Activated CD8-positive, alpha-beta memory T cell treated with anti-CD3 and anti-CD28 coated beads, Interleukin-2, amount 10 ng/mL, durations not matched to agents 7 days and 5 days (primary cell): ENCODE measurements at regions of chr7 and their contacts with region 1.

Region 1: GRCh38 chr7:112550468-112551060 is 69.8 kb downstream of the LSMEM1 start:
- DNase-seq: no peak
- ATAC-seq: peak; percentile 45
- H3K4me3 Mint-ChIP-seq: no peak overlapping the region
- H3K27ac Mint-ChIP-seq: no peak overlapping the region
- H3K4me1 Mint-ChIP-seq: no peaks in the 10 kb centered on the region
- H3K27me3 Mint-ChIP-seq: peaks cover 3% of the 10 kb centered on the region

Region 2: GRCh38 chr7:112538726-112539255 is 11.8 kb before region 1 on chr7:
- CTCF ChIA-PET with region 1: no interaction called
- DNase-seq: no peak
- ATAC-seq: no peak
- H3K4me3 Mint-ChIP-seq: no peak overlapping the region
- H3K27ac Mint-ChIP-seq: no peak overlapping the region
- H3K4me1 Mint-ChIP-seq: no peaks in the 10 kb centered on the region
- H3K27me3 Mint-ChIP-seq: peaks cover 36% of the 10 kb centered on the region

Region 3: GRCh38 chr7:112869111-112869757 is 318.7 kb after region 1 on chr7:
- CTCF ChIA-PET with region 1: interaction called, 12 read pairs
- DNase-seq: peak; percentile 70
- ATAC-seq: peak; percentile 76
- H3K4me3 Mint-ChIP-seq: no peak overlapping the region
- H3K27ac Mint-ChIP-seq: no peak overlapping the region
- H3K4me1 Mint-ChIP-seq: peaks cover 10% of the 10 kb centered on the region
- H3K27me3 Mint-ChIP-seq: no peaks in the 10 kb centered on the region

Region 4: GRCh38 chr7:112898432-112899290 is 348.1 kb after region 1 on chr7:
- CTCF ChIA-PET with region 1: interaction called, 15 read pairs
- DNase-seq: peak; percentile 52
- ATAC-seq: peak; percentile 51
- H3K4me3 Mint-ChIP-seq: no peak overlapping the region
- H3K27ac Mint-ChIP-seq: no peak overlapping the region
- H3K4me1 Mint-ChIP-seq: no peaks in the 10 kb centered on the region
- H3K27me3 Mint-ChIP-seq: no peaks in the 10 kb centered on the region